Right ventricle myocardium inferior (tissue), 1 donor: ENCODE measurements at regions of chr12 and their contacts with region 1.

Region 1: DNA sequence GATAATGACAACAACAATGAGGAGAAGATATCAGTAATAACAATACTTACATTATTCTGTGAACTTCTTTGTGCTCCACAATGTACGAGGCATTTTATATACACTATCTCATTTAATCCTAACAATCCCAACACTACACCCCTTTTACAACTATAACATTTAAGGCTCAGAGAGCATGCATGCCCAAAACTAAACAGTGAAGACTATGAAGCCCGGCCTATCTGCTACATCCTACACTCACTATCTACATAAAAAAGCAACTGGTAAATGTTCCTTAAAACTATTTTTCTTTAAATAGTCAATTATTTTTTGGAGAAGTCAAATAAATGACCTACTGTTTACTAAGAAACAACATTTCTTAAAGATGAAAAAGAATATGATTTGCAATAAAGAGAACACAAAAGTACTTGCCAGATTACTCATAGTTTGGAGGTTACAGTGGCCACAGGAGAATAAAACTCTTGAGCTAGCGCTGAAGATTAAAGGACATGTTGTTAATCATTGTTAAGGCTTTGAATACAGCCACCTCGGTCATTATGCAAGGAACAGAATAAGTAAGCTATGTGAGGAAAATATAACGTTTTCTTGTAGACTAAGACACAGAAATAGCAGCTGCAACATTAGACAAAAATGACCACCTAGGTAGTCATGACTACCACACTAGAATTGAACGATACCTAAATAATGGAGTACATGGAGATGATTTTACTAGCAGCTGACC is 56.7 kb downstream of the EPS8 start:
- DNase-seq: no peak
- ATAC-seq: peak; percentile 57

Region 2: DNA sequence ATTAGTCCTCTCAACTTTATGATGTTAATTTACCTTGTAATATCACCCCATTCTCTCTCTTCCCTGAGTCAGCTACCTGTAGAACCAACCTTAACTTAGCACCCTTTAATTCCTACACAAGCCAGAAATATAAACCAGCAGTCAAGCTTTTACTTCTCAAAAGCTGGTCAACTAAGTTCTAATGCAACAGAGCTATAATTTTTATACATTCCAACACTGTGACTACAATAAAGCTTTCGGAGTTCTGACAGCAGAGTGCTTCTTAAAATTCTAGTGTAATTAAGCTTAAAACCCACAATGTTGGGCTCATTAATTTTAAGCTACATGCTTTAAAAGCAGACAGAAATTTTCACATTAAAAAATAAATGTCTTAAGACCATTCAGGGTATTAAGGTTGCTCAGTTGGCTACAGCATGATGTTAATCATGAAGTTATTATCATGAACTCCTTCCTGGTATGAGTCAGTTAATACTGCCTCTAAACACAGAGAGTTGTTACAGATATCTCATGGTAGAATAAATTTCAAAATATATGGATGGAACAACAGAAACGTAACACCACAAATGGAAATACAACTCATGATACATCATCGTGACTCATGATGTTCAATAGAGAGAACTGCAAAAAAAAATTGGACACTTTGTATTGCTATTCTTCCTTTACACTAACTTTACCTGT is 70.1 kb before region 1 on chr12:
- intact Hi-C with region 1: loop called (anchors 10 kb)
- DNase-seq: no peak
- ATAC-seq: no peak

Region 3: DNA sequence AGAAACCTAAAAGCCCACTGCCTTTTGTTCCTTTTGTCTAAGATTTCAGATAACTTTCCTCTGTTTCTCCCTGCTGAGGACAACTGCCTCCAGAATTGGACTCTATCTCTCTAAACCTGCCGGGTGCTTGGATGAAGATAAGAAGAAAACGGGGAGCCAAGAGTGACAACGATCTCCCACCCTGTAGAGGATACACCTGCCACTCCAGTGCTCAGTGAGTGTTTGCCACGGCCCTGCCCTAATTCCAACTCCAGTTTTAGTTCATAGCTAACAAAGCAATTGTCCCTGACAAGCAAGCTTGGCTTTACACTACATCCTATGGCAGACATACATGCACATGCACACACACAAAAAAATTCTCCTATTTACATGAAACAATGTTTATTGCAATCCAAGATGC is 17.4 kb after region 1 on chr12:
- intact Hi-C with region 1: no loop called
- DNase-seq: no peak
- ATAC-seq: no peak